BJ (cell line): ENCODE measurements at regions of chr11 and their contacts with region 1.

Region 1: GRCh38 chr11:6353367-6353987 is 33.2 kb upstream of the CAVIN3 start:
- DNase-seq: no peak
- H3K4me3 ChIP-seq: no peak overlapping the region
- H3K27me3 ChIP-seq: no peaks in the 10 kb centered on the region
- CTCF ChIP-seq: peak; percentile 95

Region 2: GRCh38 chr11:6022956-6023355 is 330.5 kb before region 1 on chr11:
- CTCF ChIA-PET with region 1: interaction called, 12 read pairs
- POLR2A ChIA-PET with region 1: no interaction called
- DNase-seq: no peak
- H3K4me3 ChIP-seq: no peak overlapping the region
- H3K27me3 ChIP-seq: no peaks in the 10 kb centered on the region
- CTCF ChIP-seq: peak; percentile 48

Region 3: GRCh38 chr11:6240781-6241180 is 112.7 kb before region 1 on chr11:
- CTCF ChIA-PET with region 1: interaction called, 21 read pairs
- POLR2A ChIA-PET with region 1: no interaction called
- DNase-seq: no peak
- H3K4me3 ChIP-seq: no peak overlapping the region
- H3K27me3 ChIP-seq: peaks cover 4% of the 10 kb centered on the region; the same call in 1 of the 2 replicates
- CTCF ChIP-seq: no peak

Region 4: GRCh38 chr11:6260207-6260726 is 93.2 kb before region 1 on chr11:
- CTCF ChIA-PET with region 1: interaction called, 138 read pairs
- POLR2A ChIA-PET with region 1: no interaction called
- DNase-seq: no peak
- H3K4me3 ChIP-seq: no peak overlapping the region
- H3K27me3 ChIP-seq: peaks cover 38% of the 10 kb centered on the region
- CTCF ChIP-seq: no peak

Region 5: GRCh38 chr11:6298605-6299004 is 54.9 kb before region 1 on chr11:
- CTCF ChIA-PET with region 1: interaction called, 120 read pairs
- POLR2A ChIA-PET with region 1: no interaction called
- DNase-seq: no peak
- H3K4me3 ChIP-seq: no peak overlapping the region
- H3K27me3 ChIP-seq: 0 out of 2 replicates have a peak, but pooled peaks cover under 1% of the 10 kb centered on the region
- CTCF ChIP-seq: peak; percentile 76

Region 6: DNA sequence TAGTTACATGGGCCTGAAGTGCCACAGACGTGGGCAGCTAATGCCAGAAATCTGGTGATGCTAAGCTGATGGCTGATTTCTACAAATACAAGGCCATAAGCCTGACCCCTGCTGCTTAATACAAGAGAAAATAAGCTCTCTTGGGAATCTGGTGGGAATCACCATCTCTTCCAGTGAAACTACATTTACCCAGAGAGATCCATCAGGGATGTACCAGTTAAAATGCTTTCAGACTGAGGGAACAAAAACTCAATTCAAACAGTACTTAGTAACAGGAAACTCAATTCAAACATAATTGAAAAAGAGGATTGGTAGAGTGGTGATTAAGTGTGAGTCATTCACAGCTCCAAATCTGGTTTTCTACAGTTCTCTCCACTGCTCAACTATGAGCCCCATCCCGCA is 31.5 kb before region 1 on chr11:
- CTCF ChIA-PET with region 1: interaction called, 62 read pairs
- POLR2A ChIA-PET with region 1: interaction called, 4 read pairs
- DNase-seq: peak; percentile 41
- H3K4me3 ChIP-seq: no peak overlapping the region
- H3K27me3 ChIP-seq: no peaks in the 10 kb centered on the region
- CTCF ChIP-seq: no peak

Region 7: GRCh38 chr11:6377902-6378639 is 24.6 kb after region 1 on chr11:
- CTCF ChIA-PET with region 1: interaction called, 11 read pairs
- POLR2A ChIA-PET with region 1: no interaction called
- DNase-seq: no peak
- H3K4me3 ChIP-seq: no peak overlapping the region
- H3K27me3 ChIP-seq: no peaks in the 10 kb centered on the region; the same call in none of the 2 replicates
- CTCF ChIP-seq: no peak

Region 8: GRCh38 chr11:6419009-6419631 is 65.6 kb after region 1 on chr11 and contains the start of gene APBB1:
- CTCF ChIA-PET with region 1: no interaction called
- POLR2A ChIA-PET with region 1: no interaction called
- DNase-seq: no peak
- H3K4me3 ChIP-seq: peak within 1 kb of the TSS; percentile 87
- H3K27me3 ChIP-seq: peaks cover 4% of the 10 kb centered on the region
- CTCF ChIP-seq: peak; percentile 19; the same call in 1 of the 2 replicates
- polyA plus RNA-seq, gene APBB1: 39.5 and 62.5 TPM in 2 replicates